Psoas muscle (tissue), 8 donors: ENCODE measurements at regions of chr2 and their contacts with region 1.

Region 1: GRCh38 chr2:37832590-37833197 is 92.4 kb upstream of the RMDN2 start:
- DNase-seq: peak; percentile 85 to 92
- ATAC-seq: peak; percentile 70 to 91 (median 74)
- H3K4me3 ChIP-seq: no peak overlapping the region
- H3K27ac ChIP-seq: no peak overlapping the region
- H3K4me1 ChIP-seq: peaks cover 23% of the 10 kb centered on the region
- H3K27me3 ChIP-seq: no peaks in the 10 kb centered on the region
- CTCF ChIP-seq: peak; percentile 85

Region 2: DNA sequence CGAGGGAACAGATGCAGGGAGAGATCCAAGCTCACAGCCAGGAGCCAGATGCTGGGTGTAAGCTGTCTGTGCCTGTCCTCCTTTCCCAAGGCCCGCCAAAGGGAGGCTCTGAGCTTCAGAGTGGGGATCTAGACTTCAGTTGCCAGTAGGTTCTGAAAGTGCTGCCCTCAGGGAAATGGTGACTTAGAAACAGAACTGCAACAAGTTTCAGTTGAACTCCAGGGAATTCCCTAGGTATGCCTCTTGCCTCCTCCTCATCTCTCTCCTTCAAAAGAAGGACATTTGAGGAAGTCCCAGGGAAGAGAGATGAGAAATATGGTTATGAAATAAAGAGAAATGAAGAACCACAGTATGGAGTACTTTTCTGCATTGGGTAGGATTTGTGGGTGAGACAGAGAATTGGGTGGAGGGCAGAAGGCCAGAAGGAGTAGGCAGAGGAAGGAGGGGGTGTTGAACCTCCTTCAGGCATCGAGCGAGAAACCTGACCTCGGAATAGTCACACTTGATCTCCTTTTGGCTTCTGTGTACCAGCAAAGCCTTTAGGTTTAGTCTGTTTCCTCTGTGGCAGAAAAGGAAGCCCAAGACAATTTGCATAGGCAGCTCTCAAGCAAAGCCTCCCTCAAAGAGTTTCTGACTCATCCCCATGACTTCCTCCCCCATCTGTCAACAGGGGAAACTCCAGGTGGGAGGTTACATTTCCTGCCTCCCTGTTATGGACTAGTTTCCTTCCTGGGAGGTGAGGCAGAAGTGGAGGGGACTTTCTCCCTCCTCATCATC is 442.5 kb before region 1 on chr2:
- intact Hi-C with region 1: loop called (anchors 5 kb)
- DNase-seq: no peak
- ATAC-seq: peak; percentile 79 to 90 (median 86)
- H3K4me3 ChIP-seq: no peak overlapping the region
- H3K27ac ChIP-seq: peak overlapping the region; percentile 80
- H3K4me1 ChIP-seq: peaks cover 14% of the 10 kb centered on the region
- H3K27me3 ChIP-seq: no peaks in the 10 kb centered on the region
- CTCF ChIP-seq: no peak

Region 3: GRCh38 chr2:37549598-37549997 is 283.1 kb before region 1 on chr2:
- intact Hi-C with region 1: loop called in 1 of 2 experiments (anchors 10 kb)
- DNase-seq: no peak
- ATAC-seq: no peak
- H3K4me3 ChIP-seq: no peak overlapping the region
- H3K27ac ChIP-seq: no peak overlapping the region
- H3K4me1 ChIP-seq: no peaks in the 10 kb centered on the region
- H3K27me3 ChIP-seq: no peaks in the 10 kb centered on the region
- CTCF ChIP-seq: no peak

Region 4: DNA sequence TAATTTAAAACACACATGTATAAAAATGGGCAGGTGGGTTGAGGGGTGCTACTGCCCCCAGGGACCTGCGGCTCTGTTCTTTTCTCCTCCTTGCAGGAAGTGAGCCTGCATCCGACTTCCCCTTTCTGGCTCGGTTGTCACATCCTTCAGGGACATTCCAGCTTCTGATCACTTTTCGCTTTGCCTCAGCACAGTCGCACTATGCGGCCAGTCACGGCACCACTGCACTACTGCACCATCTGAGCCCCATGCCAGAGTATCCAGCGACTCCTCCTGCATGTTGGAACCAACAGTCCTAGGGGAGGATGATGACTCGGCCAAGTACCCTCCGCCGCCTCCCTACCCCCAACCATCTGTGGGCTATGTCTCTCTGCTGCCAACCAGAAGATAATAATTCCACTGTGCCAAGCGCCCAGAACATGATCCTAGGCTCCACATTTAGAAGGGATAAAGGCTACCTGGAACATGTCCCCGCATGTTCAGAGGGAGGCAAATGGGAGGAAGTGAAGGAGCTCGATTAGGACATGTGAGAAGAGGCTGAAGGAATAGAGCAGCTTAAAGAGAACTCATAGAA is 178.8 kb before region 1 on chr2:
- intact Hi-C with region 1: loop called in 1 of 2 experiments (anchors 5 kb)
- DNase-seq: peak; percentile 73 to 92
- ATAC-seq: peak; percentile 80 to 93 (median 90)
- H3K4me3 ChIP-seq: peak overlapping the region; percentile 50
- H3K27ac ChIP-seq: peak overlapping the region; percentile 90
- H3K4me1 ChIP-seq: peaks cover 85% of the 10 kb centered on the region
- H3K27me3 ChIP-seq: no peaks in the 10 kb centered on the region
- CTCF ChIP-seq: no peak

Region 5: GRCh38 chr2:37795938-37796337 is 36.8 kb before region 1 on chr2:
- intact Hi-C with region 1: loop called in 1 of 2 experiments (anchors 2 kb)
- DNase-seq: no peak
- ATAC-seq: no peak
- H3K4me3 ChIP-seq: no peak overlapping the region
- H3K27ac ChIP-seq: peak overlapping the region; percentile 81
- H3K4me1 ChIP-seq: peaks cover 38% of the 10 kb centered on the region
- H3K27me3 ChIP-seq: no peaks in the 10 kb centered on the region
- CTCF ChIP-seq: no peak

Region 6: DNA sequence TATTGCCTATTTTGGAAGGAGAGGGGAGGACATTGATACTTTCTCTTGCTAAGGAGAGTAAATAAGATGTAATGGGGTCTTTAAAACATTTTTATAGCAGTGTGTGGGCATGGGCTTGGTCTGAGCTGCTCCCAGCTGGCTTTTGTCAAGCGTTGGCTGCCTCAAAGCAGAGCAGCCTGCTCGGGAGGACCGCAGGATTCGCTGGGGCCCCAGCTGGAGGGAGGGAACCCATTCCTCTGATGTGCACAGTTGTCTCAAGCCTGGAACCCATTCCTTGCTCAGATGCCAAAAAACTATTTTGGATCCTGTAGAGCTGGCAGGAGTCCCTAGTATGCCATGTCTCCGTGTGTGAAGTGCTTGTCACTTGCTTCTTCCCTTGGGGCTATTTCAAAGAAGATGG is 32.9 kb after region 1 on chr2:
- intact Hi-C with region 1: no loop called
- DNase-seq: no peak
- ATAC-seq: no peak
- H3K4me3 ChIP-seq: no peak overlapping the region
- H3K27ac ChIP-seq: no peak overlapping the region
- H3K4me1 ChIP-seq: no peaks in the 10 kb centered on the region
- H3K27me3 ChIP-seq: no peaks in the 10 kb centered on the region
- CTCF ChIP-seq: no peak

Region 7: GRCh38 chr2:37877457-37878315 is 45.0 kb after region 1 on chr2:
- intact Hi-C with region 1: loop called in 1 of 2 experiments (anchors 2 kb)
- DNase-seq: no peak
- ATAC-seq: peak; percentile 78 to 95 (median 82)
- H3K4me3 ChIP-seq: no peak overlapping the region
- H3K27ac ChIP-seq: no peak overlapping the region
- H3K4me1 ChIP-seq: peaks cover 5% of the 10 kb centered on the region
- H3K27me3 ChIP-seq: peaks cover 0 to 2% (median 0%) of the 10 kb centered on the region in 3 donors
- CTCF ChIP-seq: peak; percentile 81

Region 8: GRCh38 chr2:37934591-37935513 is 102.2 kb after region 1 on chr2:
- intact Hi-C with region 1: no loop called
- DNase-seq: no peak
- ATAC-seq: no peak
- H3K4me3 ChIP-seq: no peak overlapping the region
- H3K27ac ChIP-seq: no peak overlapping the region
- H3K4me1 ChIP-seq: peaks cover 7% of the 10 kb centered on the region
- H3K27me3 ChIP-seq: no peaks in the 10 kb centered on the region
- CTCF ChIP-seq: no peak

Region 9: GRCh38 chr2:38370664-38371063 is 538.0 kb after region 1 on chr2:
- intact Hi-C with region 1: no loop called
- DNase-seq: no peak
- ATAC-seq: no peak
- H3K4me3 ChIP-seq: no peak overlapping the region
- H3K27ac ChIP-seq: no peak overlapping the region
- H3K4me1 ChIP-seq: peaks cover 37% of the 10 kb centered on the region
- H3K27me3 ChIP-seq: no peaks in the 10 kb centered on the region
- CTCF ChIP-seq: no peak